ENCODE measurements at regions of chr13 and their contacts with region 1.

Region 1: DNA sequence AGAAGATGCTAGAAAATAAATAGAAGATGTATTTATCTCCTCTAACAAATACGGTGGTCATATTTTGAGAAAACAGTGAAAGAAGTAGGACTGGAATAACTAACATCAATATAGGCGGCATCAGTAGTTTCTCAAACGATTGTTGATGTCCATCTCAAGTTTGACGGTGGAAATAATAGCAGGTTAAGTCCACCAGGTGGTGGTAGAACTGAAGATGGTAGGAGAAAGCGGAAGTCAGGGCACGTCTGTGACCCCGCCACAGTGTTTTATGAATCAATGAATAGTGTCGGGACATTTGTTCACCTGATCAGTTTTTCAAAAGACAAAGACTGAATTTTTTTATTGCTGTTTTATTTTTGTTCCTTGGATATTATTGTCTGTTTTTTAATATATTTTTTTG is 706.4 kb upstream of the SLC10A2 start:
- DNase-seq: no peak
- CTCF ChIP-seq: no peak

Region 2: DNA sequence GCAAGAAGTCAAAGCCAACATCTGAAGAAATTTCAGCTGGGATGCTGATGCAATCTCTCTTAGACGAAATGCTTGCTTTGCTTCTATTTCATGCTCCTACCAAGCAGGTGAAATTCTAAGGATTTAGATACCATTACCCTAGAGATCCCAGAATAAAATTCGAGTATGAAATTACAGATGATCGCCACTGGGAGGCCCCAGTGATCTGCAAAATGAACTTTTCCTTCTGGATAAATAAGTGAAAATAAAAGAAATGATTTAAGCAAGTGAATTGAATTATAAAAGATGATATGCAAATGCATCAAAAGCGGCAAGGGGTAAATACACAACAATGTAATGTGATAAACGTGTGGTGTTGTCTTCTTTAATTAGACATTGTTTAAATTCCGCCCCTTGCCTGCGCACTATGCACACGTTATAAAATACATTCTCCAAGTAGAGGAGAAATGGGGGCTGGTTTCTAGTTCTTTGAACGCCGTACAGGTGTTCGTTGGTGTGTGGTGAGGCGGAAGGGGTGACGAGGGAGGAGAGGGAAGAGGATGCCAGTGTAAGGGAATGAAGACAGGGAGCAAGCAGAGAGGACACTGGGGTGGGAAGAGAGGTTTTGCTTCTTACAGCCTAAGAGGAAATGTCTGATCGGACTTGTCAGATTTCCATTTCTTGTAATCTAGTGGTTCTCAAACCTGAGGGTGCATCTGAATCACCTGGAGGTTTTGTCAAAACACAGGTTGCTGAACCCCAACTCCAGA is 868.7 kb before region 1 on chr13:
- in situ Hi-C with region 1: loop called (anchors 25 kb)
- DNase-seq: no peak
- CTCF ChIP-seq: peak; percentile 22

Region 3: DNA sequence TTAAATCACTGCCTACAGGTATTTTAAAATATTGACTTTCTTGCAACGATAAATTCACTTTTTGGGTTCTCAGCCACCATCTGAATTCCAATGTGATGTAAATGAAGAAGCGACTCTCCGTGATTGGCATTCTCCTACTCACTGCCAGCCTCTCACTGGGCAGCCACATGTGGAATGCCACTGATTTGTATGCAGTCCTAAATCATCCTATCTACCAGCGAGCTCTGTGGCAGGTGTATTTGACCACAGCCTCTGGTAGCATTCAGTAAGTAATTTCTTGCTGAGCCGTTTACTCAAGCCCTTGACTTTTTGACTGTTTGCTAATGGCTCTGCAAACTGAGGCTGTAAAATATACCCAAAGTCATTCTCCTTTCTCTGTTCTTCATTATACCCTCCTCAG is 147.4 kb before region 1 on chr13:
- in situ Hi-C with region 1: no loop called
- DNase-seq: no peak
- CTCF ChIP-seq: no peak

Region 4: GRCh38 chr13:103833294-103833852 is 60.8 kb after region 1 on chr13:
- in situ Hi-C with region 1: no loop called
- DNase-seq: no peak
- CTCF ChIP-seq: no peak

Measured in GM13976 (cell line).